Breast epithelium (tissue), 4 donors: ENCODE measurements at regions of chr11 and their contacts with region 1.

Region 1: GRCh38 chr11:98874050-98874449 is 146.7 kb upstream of the CNTN5 start:
- DNase-seq: no peak
- H3K4me3 ChIP-seq: no peak overlapping the region
- H3K27ac ChIP-seq: no peak overlapping the region
- H3K4me1 ChIP-seq: no peaks in the 10 kb centered on the region
- H3K27me3 ChIP-seq: no peaks in the 10 kb centered on the region
- CTCF ChIP-seq: no peak
- POLR2A ChIP-seq: no peak

Region 2: DNA sequence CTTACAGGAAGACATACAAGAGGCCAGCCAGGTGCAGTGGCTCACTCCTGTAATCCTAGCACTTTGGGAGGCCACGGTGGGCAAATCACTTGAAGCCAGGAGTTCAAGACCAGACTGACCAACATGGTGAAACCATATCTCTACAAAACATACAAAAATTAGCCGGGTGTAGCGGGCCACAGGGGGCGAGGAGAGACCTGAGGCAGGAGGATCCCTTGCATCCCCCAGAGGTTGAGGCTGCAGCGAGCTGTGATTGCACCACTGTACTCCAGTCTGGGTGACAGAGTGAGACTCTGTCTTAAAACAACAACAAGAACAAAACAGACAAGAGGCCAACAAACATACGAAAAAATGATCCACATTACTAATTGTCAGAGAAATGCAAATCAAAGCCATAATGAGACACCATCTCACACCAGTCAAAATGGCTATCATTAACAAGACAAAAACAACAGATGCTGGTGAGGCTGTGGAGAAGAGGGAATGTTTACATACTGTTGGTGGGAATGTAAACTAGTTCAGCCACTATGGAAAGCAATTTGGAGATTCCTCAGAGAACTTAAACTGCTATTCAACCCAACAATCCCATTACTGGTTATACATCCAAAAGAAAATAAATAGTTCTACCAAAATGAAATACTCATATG is 1314.2 kb after region 1 on chr11:
- intact Hi-C with region 1: loop called (anchors 10 kb)
- DNase-seq: no peak
- H3K4me3 ChIP-seq: no peak overlapping the region
- H3K27ac ChIP-seq: no peak overlapping the region
- H3K4me1 ChIP-seq: no peaks in the 10 kb centered on the region
- H3K27me3 ChIP-seq: no peaks in the 10 kb centered on the region
- CTCF ChIP-seq: no peak
- POLR2A ChIP-seq: no peak